ENCODE measurements at regions of chr15 and their contacts with region 1.

Region 1: GRCh38 chr15:90931737-90932659 is at the start of gene HDDC3:
- DNase-seq: peak; percentile 58
- H3K4me3 ChIP-seq: peak within 1 kb of the TSS; percentile 91
- H3K27ac ChIP-seq: peak within 1 kb of the TSS; percentile 11
- H3K27me3 ChIP-seq: no peaks in the 10 kb centered on the region
- CTCF ChIP-seq: peak; percentile 90
- polyA plus RNA-seq, gene HDDC3: 10.0 and 10.3 TPM in 2 replicates

Region 2: DNA sequence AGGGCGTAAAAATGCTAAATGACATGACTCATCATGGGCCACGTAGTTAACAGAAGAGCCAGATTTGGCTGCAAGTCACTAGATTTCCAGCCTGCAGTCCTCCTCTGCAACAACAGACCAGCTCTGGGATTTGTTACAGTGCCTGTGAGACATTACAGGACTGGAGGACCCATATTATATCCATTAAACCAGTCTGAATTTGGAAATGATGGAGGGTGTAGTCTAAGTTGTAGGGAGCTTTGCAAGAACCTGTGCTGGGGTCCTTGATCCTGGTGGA is 569.1 kb before region 1 on chr15:
- CTCF ChIA-PET with region 1: no interaction called
- POLR2A ChIA-PET with region 1: no interaction called
- DNase-seq: peak; percentile 53
- H3K4me3 ChIP-seq: no peak overlapping the region
- H3K27ac ChIP-seq: peak overlapping the region; percentile 53
- H3K27me3 ChIP-seq: no peaks in the 10 kb centered on the region
- CTCF ChIP-seq: no peak

Region 3: GRCh38 chr15:90886041-90886614 is 45.9 kb before region 1 on chr15:
- CTCF ChIA-PET with region 1: interaction called, 20 read pairs
- POLR2A ChIA-PET with region 1: interaction called, 4 read pairs
- DNase-seq: peak; percentile 24
- H3K4me3 ChIP-seq: no peak overlapping the region
- H3K27ac ChIP-seq: no peak overlapping the region
- H3K27me3 ChIP-seq: no peaks in the 10 kb centered on the region
- CTCF ChIP-seq: peak; percentile 99

Region 4: GRCh38 chr15:90915216-90915807 is 16.7 kb before region 1 on chr15:
- CTCF ChIA-PET with region 1: interaction called, 34 read pairs
- POLR2A ChIA-PET with region 1: interaction called, 3 read pairs
- DNase-seq: no peak
- H3K4me3 ChIP-seq: no peak overlapping the region
- H3K27ac ChIP-seq: peak overlapping the region; percentile 11
- H3K27me3 ChIP-seq: no peaks in the 10 kb centered on the region
- CTCF ChIP-seq: no peak

Region 5: DNA sequence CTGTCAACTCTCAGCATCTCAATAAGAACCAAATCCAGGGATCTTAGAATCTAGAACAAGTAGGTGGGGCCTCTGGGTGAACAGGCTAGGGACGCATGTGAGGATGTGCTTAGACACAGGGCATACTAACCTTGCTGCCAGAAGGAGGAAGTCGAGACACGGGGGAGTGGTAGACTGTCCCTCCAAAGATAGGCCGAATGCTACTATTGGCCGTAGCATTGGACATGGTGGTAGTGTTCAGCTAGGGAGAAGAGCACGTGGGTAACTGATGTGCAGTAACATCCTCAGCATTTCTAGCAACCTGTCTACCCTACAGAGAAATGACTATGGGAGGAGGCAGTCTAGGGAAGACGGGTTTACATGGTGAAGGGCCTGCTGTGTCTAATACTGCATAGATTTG is 38.3 kb after region 1 on chr15:
- CTCF ChIA-PET with region 1: interaction called, 10 read pairs
- POLR2A ChIA-PET with region 1: no interaction called
- DNase-seq: no peak
- H3K4me3 ChIP-seq: no peak overlapping the region
- H3K27ac ChIP-seq: no peak overlapping the region
- H3K27me3 ChIP-seq: no peaks in the 10 kb centered on the region
- CTCF ChIP-seq: no peak

Measured in AG04450 (cell line).